Dendritic cell treated with granulocyte-macrophage colony-stimulating factor and Interleukin-4, amounts not matched to agents 40 ng/mL and 50 ng/mL, for 4 days (primary cell): ENCODE measurements at regions of chr17 and their contacts with region 1.

Region 1: GRCh38 chr17:44110823-44111633 is 12.4 kb downstream of the HDAC5 start:
- H3K4me3 Mint-ChIP-seq: peak overlapping the region; percentile 68
- H3K27ac Mint-ChIP-seq: peak overlapping the region; percentile 73
- H3K4me1 Mint-ChIP-seq: peaks cover 64% of the 10 kb centered on the region
- H3K27me3 Mint-ChIP-seq: no peaks in the 10 kb centered on the region

Region 2: DNA sequence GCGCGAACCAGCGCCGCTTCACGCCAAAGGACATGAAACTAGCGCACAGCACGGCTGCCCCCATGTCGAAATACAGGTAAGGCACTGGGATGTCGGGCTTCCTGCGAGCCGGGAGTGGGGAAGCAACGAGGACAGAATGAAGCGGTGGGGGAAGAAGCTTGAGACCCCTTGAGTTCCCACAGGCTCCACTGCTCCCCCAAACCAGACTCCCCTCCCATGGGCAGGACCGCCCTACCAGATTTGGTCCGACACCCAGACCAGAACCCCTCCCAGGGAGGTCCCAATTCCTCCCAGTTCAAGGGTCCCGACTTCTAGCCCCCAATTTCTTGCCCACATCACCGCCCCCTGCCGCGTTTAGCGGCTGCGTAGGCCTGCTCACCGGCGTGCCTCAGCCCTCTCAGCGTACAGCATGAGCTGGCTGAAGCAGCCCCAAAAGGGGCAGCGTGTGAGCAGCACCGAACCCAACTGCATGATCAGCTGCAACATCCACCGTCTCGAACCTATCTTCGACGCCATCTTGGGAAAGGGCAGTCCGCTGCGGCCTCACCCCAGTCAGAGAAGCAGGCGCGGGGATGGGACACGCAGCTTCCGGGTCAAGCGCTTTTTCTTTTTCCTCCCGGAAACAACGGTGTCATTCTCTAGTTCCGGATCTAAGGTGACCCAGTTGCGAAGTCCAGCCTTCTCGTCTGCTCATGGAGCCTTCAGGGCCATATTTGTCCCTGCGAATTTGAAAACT is 96.4 kb before region 1 on chr17 and contains the start of gene TMEM101:
- intact Hi-C with region 1: loop called (anchors 10 kb)
- H3K4me3 Mint-ChIP-seq: peak within 1 kb of the TSS; percentile 100
- H3K27ac Mint-ChIP-seq: peak within 1 kb of the TSS; percentile 99
- H3K4me1 Mint-ChIP-seq: peaks cover 35% of the 10 kb centered on the region
- H3K27me3 Mint-ChIP-seq: peaks cover 2% of the 10 kb centered on the region

Region 3: GRCh38 chr17:44053125-44053872 is 57.7 kb before region 1 on chr17:
- intact Hi-C with region 1: no loop called
- H3K4me3 Mint-ChIP-seq: no peak overlapping the region
- H3K27ac Mint-ChIP-seq: peak overlapping the region; percentile 14
- H3K4me1 Mint-ChIP-seq: peaks cover 23% of the 10 kb centered on the region
- H3K27me3 Mint-ChIP-seq: no peaks in the 10 kb centered on the region